ENCODE measurements at regions of chr16 and their contacts with region 1.

Region 1: GRCh38 chr16:53022374-53022773 is 30.3 kb downstream of the CHD9NB start:
- DNase-seq: peak; percentile 51
- ATAC-seq: peak; percentile 96
- H3K4me3 Mint-ChIP-seq: no peak overlapping the region
- H3K27ac Mint-ChIP-seq: no peak overlapping the region
- H3K4me1 Mint-ChIP-seq: peaks cover 13% of the 10 kb centered on the region; the same call in 1 of the 2 replicates
- H3K27me3 Mint-ChIP-seq: no peaks in the 10 kb centered on the region
- CTCF ChIP-seq: peak; percentile 64

Region 2: DNA sequence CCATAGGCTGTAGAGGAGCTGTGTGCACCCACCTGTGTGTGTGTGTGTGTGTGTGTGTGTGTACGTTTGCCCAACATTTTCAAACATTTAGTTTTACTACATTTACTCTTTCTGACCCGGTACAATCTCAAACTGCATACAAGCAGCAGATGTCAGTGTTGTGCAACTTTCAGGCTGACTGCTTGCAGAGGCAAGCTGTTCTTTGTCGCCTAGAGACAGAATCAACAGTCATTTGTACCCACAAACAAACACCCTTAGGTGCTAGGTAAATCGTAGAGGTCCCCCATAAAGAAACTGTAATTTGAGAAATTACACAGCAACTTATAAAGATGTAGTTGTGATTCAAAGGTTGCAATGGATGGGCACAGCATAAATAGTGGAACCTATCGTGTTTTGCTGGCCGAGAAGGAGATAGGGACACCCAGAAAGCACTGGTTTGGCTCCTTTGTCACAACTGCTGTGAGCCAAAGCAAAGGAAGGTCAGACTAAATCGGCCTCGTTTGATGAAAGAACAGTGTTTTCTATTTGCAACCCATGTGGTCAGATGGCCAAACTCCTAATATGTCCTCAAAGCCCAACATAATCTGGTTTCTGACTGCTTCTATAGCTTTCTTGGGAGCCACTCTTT is 953.8 kb before region 1 on chr16:
- CTCF ChIA-PET with region 1: interaction called, 28 read pairs
- POLR2A ChIA-PET with region 1: no interaction called
- DNase-seq: peak; percentile 44
- ATAC-seq: peak; percentile 58; the same call in 1 of the 2 replicates
- H3K4me3 Mint-ChIP-seq: no peak overlapping the region
- H3K27ac Mint-ChIP-seq: no peak overlapping the region
- H3K4me1 Mint-ChIP-seq: peaks cover 3% of the 10 kb centered on the region
- H3K27me3 Mint-ChIP-seq: no peaks in the 10 kb centered on the region
- CTCF ChIP-seq: no peak

Region 3: GRCh38 chr16:52912565-52913173 is 109.7 kb before region 1 on chr16:
- CTCF ChIA-PET with region 1: interaction called, 15 read pairs
- POLR2A ChIA-PET with region 1: no interaction called
- DNase-seq: peak; percentile 83
- ATAC-seq: peak; percentile 93
- H3K4me3 Mint-ChIP-seq: no peak overlapping the region
- H3K27ac Mint-ChIP-seq: no peak overlapping the region
- H3K4me1 Mint-ChIP-seq: peaks cover 6% of the 10 kb centered on the region
- H3K27me3 Mint-ChIP-seq: no peaks in the 10 kb centered on the region
- CTCF ChIP-seq: peak; percentile 65

Region 4: DNA sequence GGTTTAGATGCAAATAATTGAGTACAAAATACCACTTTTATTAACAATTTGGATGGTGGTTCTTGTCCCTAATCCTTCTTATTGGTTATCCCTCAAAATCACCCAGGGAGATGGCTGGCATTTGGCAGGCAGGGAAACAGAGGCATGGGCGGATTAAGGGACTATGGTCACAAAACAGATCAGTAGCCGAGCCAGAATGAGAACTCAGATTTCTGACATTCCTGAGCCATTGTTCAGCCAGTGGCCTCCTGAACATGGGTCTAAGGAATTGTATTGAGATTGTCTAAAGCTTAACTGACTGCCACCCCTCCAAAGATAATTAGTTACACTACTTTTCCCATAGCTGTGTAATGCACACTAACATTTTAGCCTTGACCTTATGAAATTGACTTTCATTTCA is 58.1 kb before region 1 on chr16:
- CTCF ChIA-PET with region 1: interaction called, 11 read pairs
- POLR2A ChIA-PET with region 1: no interaction called
- DNase-seq: no peak
- ATAC-seq: no peak
- H3K4me3 Mint-ChIP-seq: no peak overlapping the region
- H3K27ac Mint-ChIP-seq: no peak overlapping the region
- H3K4me1 Mint-ChIP-seq: peaks cover 16% of the 10 kb centered on the region
- H3K27me3 Mint-ChIP-seq: no peaks in the 10 kb centered on the region; the same call in 1 of the 2 replicates
- CTCF ChIP-seq: no peak

Region 5: GRCh38 chr16:52976539-52977167 is 45.7 kb before region 1 on chr16:
- CTCF ChIA-PET with region 1: interaction called, 25 read pairs
- POLR2A ChIA-PET with region 1: no interaction called
- DNase-seq: no peak
- ATAC-seq: peak; percentile 89
- H3K4me3 Mint-ChIP-seq: no peak overlapping the region
- H3K27ac Mint-ChIP-seq: no peak overlapping the region
- H3K4me1 Mint-ChIP-seq: no peaks in the 10 kb centered on the region
- H3K27me3 Mint-ChIP-seq: no peaks in the 10 kb centered on the region; the same call in 1 of the 2 replicates
- CTCF ChIP-seq: no peak